ENCODE measurements at regions of chr10 and their contacts with region 1.

Region 1: GRCh38 chr10:88835096-88835909 is 16.3 kb downstream of the ANKRD22 start:
- DNase-seq: peak; percentile 89
- H3K4me3 Mint-ChIP-seq: no peak overlapping the region
- H3K27ac Mint-ChIP-seq: no peak overlapping the region
- H3K4me1 Mint-ChIP-seq: no peaks in the 10 kb centered on the region
- H3K27me3 Mint-ChIP-seq: no peaks in the 10 kb centered on the region
- CTCF ChIP-seq: peak; percentile 78

Region 2: DNA sequence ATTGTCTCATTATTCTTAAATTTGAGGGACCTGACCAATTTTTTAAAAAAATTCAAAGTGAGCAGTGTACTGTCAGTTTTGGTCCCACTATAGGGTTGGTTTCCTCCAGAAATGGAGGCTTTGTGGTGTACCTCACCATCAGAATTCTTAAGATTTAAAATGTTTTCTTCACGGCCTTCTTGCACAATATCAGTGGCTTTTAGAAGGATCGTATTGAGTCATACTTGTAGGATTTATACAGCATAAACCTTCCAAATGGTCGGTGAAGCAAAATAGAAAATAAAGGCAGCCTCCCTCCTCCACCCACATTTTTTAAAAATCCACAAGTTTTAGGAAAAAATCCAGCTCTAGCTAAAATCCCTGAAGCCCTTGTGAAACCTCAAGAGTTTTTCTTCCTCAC is 378.6 kb before region 1 on chr10:
- CTCF ChIA-PET with region 1: no interaction called
- POLR2A ChIA-PET with region 1: no interaction called
- intact Hi-C with region 1: no loop called
- DNase-seq: peak; percentile 49
- H3K4me3 Mint-ChIP-seq: no peak overlapping the region
- H3K27ac Mint-ChIP-seq: peak overlapping the region; percentile 77
- H3K4me1 Mint-ChIP-seq: peaks cover 22% of the 10 kb centered on the region
- H3K27me3 Mint-ChIP-seq: no peaks in the 10 kb centered on the region
- CTCF ChIP-seq: no peak

Region 3: DNA sequence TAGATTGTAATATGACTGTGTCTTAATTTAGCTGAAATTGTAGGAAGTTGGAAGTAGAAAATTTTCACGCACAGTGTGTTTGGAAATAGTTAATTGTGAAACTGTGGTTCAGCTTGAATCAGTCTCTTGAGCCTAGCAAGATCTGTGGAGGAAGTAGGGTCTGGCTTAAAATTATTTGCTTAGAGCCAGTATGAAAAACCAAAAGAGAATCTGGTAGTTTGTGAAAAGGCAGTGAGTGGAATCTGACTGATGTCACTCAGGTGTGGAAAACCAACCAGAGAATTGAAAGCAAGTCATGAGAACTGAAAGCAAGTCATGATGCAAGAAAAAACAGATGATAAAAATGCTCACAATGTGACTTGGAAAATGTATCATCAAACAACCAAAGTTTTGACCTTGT is 237.2 kb before region 1 on chr10:
- CTCF ChIA-PET with region 1: interaction called, 10 read pairs
- POLR2A ChIA-PET with region 1: no interaction called
- intact Hi-C with region 1: no loop called
- DNase-seq: no peak
- H3K4me3 Mint-ChIP-seq: no peak overlapping the region
- H3K27ac Mint-ChIP-seq: no peak overlapping the region
- H3K4me1 Mint-ChIP-seq: no peaks in the 10 kb centered on the region
- H3K27me3 Mint-ChIP-seq: no peaks in the 10 kb centered on the region
- CTCF ChIP-seq: no peak

Region 4: DNA sequence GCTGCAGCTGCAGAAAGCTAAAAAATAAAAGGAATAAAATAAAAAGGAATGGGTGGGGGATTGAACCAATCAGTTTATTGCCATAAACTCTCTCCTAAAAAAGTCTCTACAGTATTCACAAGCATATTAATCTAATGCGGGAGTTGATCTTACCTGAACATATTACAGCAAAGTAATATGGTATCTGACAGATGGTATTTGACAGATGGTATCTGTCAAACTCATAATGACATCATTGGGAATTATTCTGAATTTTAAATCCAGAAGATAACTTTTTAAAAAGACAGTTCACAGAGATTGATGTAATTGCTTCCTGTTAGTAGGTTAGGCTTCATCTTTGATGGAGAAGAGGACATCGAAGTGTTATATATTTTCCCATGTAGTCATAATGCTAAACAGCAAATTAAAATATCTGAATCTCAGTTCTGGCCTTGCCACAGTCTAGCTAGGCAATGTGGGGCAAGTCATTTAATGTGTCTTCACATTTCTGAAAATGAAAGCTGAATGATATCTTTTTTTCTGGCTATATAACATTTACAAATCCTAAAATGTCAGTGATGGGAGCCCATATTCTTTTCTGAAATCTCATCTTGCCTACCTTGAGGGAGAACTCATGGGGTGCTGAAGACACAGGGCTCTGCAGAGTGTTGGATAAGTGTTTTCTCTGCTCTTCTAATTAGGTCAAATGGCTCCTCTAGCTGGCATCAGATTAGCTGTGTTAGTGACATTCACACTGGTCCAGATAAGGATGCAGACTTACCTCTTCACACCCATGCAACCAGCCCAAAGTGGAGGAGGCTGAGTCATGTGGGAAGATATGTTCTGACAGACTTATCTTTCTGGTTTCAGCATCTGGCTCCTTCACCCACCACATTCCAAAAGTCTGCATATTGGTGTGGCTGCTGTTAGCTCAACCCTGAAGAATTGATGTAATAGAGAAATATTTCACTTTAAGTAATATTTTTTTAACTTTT is 34.9 kb before region 1 on chr10:
- CTCF ChIA-PET with region 1: no interaction called
- POLR2A ChIA-PET with region 1: no interaction called
- intact Hi-C with region 1: no loop called
- DNase-seq: no peak
- H3K4me3 Mint-ChIP-seq: no peak overlapping the region
- H3K27ac Mint-ChIP-seq: no peak overlapping the region
- H3K4me1 Mint-ChIP-seq: no peaks in the 10 kb centered on the region
- H3K27me3 Mint-ChIP-seq: no peaks in the 10 kb centered on the region
- CTCF ChIP-seq: no peak

Region 5: GRCh38 chr10:88851706-88852105 is 16.4 kb after region 1 on chr10 and contains the start of gene ANKRD22:
- CTCF ChIA-PET with region 1: interaction called, 50 read pairs
- POLR2A ChIA-PET with region 1: interaction called, 6 read pairs
- intact Hi-C with region 1: no loop called
- DNase-seq: peak; percentile 95
- H3K4me3 Mint-ChIP-seq: peak within 1 kb of the TSS; percentile 49
- H3K27ac Mint-ChIP-seq: peak within 1 kb of the TSS; percentile 88
- H3K4me1 Mint-ChIP-seq: peaks cover 32% of the 10 kb centered on the region
- H3K27me3 Mint-ChIP-seq: no peaks in the 10 kb centered on the region
- CTCF ChIP-seq: no peak
- total RNA-seq, gene ANKRD22: 0.26 TPM in 1 of 2 replicates, not detected in the other

Region 6: DNA sequence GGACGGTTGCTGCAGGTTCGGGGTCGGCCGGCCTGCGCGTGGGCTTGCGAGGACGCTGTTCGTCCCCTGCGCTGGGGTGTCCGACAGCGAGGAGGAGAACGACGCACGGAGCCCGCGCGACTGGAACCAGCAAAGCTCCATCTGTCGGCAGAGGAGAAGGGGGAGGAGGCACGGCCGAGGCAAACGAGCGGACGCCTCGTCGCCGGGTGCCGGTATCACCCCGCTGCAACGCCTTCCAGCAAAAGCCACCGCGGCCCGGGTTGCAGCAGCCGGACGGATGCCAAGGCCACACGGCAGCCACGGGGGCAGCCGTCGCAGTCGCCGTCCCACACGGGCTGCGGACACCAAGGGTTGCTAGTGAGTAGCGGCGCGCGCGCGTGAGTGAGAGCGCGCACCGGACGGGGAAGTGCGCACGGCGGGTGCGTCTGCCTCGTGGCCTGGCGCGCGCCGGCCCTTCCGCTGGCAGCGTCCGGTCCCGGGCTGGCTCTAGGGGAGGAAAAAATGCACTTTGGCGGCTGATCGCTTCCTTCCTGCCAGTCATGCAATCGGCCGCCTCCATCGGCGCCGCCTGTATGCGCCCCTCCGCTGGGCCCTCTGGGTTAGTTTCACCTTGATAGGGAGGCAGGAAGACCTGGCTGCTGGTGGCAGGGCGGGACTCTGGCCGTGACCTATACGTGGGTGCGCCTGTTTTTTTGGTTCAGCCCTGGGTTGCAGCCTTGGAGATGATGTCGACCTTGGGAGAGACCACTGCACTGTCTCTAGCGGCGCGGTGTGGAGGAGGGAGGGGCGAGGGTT is 45.2 kb after region 1 on chr10:
- CTCF ChIA-PET with region 1: interaction called, 17 read pairs
- POLR2A ChIA-PET with region 1: interaction called, 36 read pairs
- intact Hi-C with region 1: loop called (anchors 1 kb)
- DNase-seq: peak; percentile 84
- H3K4me3 Mint-ChIP-seq: peak overlapping the region; percentile 97
- H3K27ac Mint-ChIP-seq: peak overlapping the region; percentile 91
- H3K4me1 Mint-ChIP-seq: peaks cover 29% of the 10 kb centered on the region
- H3K27me3 Mint-ChIP-seq: no peaks in the 10 kb centered on the region
- CTCF ChIP-seq: no peak

Region 7: GRCh38 chr10:88944813-88945212 is 109.5 kb after region 1 on chr10:
- CTCF ChIA-PET with region 1: interaction called, 10 read pairs
- POLR2A ChIA-PET with region 1: no interaction called
- intact Hi-C with region 1: no loop called
- DNase-seq: no peak
- H3K4me3 Mint-ChIP-seq: no peak overlapping the region
- H3K27ac Mint-ChIP-seq: no peak overlapping the region
- H3K4me1 Mint-ChIP-seq: no peaks in the 10 kb centered on the region
- H3K27me3 Mint-ChIP-seq: no peaks in the 10 kb centered on the region
- CTCF ChIP-seq: no peak